Activated naive CD4-positive, alpha-beta T cell treated with anti-CD3 and anti-CD28 coated beads for 36 hours (primary cell): ENCODE measurements at regions of chr10 and their contacts with region 1.

Region 1: DNA sequence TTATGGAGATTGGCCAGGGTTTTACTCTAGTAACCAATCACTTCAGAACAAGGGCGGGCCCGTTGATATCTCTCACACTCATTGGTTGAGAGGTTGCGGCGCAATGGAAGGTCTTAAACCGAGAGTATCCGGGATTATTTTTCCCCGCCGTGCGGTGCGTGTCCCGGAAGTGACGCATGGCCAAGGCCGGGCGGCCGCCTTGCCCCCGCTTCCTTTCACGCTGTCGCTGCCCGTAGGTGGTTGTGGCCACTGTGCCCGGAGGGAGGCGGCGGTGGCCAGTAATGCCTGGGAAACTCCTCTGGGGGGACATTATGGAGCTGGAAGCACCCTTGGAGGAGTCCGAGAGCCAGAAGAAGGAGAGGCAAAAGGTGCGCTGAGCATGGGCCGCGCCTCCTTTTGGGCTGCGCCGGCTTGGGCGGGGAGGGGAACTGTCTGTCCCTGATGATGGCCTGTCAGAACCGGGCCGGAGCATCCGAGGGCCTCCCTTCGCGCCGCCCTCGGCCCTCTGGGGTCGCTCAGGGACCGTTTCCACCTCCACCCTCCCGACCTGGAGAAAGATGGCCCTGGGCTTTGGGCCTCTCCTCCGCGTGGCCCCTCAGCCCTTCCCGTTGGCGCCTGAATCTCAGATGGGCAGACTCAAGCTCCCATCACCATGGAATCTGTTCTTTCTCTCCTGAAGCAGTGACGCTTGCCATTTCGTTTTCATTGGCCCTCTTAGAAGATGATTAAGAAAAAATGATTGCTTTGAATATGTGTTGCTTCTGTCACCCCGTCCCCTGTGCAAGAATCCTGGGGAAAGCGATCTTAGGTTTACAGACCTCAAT is at the start of gene DDX50:
- DNase-seq: peak; percentile 99
- H3K4me3 Mint-ChIP-seq: peak within 1 kb of the TSS; percentile 93
- H3K27ac Mint-ChIP-seq: peak within 1 kb of the TSS; percentile 97
- H3K4me1 Mint-ChIP-seq: peaks cover 40% of the 10 kb centered on the region
- H3K27me3 Mint-ChIP-seq: no peaks in the 10 kb centered on the region
- total RNA-seq, gene DDX50: 62.1 to 66.0 TPM

Region 2: DNA sequence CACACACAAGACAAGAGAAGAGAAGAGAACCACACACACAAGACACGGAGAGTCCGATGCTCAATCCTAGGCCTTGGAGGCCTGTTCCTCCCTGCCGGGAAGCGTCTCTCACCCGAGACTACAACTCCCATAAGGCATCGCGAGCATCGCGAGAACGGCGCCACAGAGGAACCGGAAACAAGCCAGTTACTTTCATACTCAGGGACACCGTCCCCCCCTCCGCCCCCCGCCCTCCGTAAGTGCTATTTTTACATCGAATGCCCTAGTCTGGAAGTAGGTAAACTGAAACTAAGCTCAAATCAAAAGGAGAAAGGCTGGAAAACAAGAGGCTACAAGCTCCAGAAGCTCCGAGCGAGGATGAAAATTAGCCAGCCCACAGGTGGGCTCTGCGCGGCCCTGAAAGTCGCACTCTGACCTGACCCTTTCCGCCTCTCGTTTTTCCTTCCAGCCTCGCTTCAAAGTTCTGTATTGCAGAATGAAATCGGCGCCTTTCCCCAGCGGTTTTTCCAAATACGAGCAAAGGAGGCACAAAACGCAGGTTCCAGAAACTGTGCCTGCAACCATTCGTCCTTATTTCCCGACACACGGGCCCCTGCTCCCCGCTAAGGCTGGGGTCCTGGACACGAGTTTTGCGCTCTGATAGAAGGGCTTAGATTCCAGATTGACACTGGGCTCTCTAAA is 1051.8 kb before region 1 on chr10:
- CTCF ChIA-PET with region 1: no interaction called
- intact Hi-C with region 1: loop called (anchors 10 kb)
- DNase-seq: peak; percentile 98
- H3K4me3 Mint-ChIP-seq: peak overlapping the region; percentile 97
- H3K27ac Mint-ChIP-seq: peak overlapping the region; percentile 98
- H3K4me1 Mint-ChIP-seq: peaks cover 8% of the 10 kb centered on the region
- H3K27me3 Mint-ChIP-seq: no peaks in the 10 kb centered on the region

Region 3: GRCh38 chr10:68208424-68209042 is 692.8 kb before region 1 on chr10:
- CTCF ChIA-PET with region 1: no interaction called
- intact Hi-C with region 1: loop called (anchors 1 kb)
- DNase-seq: peak; percentile 63
- H3K4me3 Mint-ChIP-seq: no peak overlapping the region
- H3K27ac Mint-ChIP-seq: no peak overlapping the region
- H3K4me1 Mint-ChIP-seq: no peaks in the 10 kb centered on the region
- H3K27me3 Mint-ChIP-seq: no peaks in the 10 kb centered on the region

Region 4: GRCh38 chr10:68526626-68527307 is 374.5 kb before region 1 on chr10:
- CTCF ChIA-PET with region 1: no interaction called
- intact Hi-C with region 1: loop called (anchors 1 kb)
- DNase-seq: no peak
- H3K4me3 Mint-ChIP-seq: peak overlapping the region; percentile 93
- H3K27ac Mint-ChIP-seq: peak overlapping the region; percentile 87
- H3K4me1 Mint-ChIP-seq: peaks cover 5% of the 10 kb centered on the region
- H3K27me3 Mint-ChIP-seq: no peaks in the 10 kb centered on the region

Region 5: GRCh38 chr10:68586606-68587305 is 314.6 kb before region 1 on chr10:
- CTCF ChIA-PET with region 1: no interaction called
- intact Hi-C with region 1: no loop called
- DNase-seq: no peak
- H3K4me3 Mint-ChIP-seq: no peak overlapping the region
- H3K27ac Mint-ChIP-seq: no peak overlapping the region
- H3K4me1 Mint-ChIP-seq: no peaks in the 10 kb centered on the region
- H3K27me3 Mint-ChIP-seq: no peaks in the 10 kb centered on the region

Region 6: DNA sequence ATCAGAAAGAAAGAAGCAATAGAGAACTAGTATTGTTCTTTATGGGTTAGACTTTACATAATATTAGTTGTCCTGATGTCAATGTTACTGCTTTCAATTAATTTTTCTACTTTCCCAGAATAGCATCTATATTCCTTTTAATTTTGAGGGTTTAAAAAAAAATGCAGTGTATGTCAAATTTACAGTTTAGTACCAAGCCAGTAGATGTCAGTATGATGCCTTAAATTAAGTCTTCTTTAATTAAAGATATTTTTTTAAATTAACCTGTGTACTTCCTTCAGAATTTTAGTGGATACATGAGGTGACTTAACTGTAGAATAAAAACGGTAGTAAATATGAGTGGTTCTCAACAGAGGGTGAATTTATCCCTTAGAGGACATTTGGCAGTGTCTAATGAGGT is 109.2 kb before region 1 on chr10:
- CTCF ChIA-PET with region 1: interaction called, 3 read pairs
- intact Hi-C with region 1: loop called (anchors 2 kb)
- DNase-seq: no peak
- H3K4me3 Mint-ChIP-seq: no peak overlapping the region
- H3K27ac Mint-ChIP-seq: no peak overlapping the region
- H3K4me1 Mint-ChIP-seq: no peaks in the 10 kb centered on the region
- H3K27me3 Mint-ChIP-seq: no peaks in the 10 kb centered on the region

Region 7: DNA sequence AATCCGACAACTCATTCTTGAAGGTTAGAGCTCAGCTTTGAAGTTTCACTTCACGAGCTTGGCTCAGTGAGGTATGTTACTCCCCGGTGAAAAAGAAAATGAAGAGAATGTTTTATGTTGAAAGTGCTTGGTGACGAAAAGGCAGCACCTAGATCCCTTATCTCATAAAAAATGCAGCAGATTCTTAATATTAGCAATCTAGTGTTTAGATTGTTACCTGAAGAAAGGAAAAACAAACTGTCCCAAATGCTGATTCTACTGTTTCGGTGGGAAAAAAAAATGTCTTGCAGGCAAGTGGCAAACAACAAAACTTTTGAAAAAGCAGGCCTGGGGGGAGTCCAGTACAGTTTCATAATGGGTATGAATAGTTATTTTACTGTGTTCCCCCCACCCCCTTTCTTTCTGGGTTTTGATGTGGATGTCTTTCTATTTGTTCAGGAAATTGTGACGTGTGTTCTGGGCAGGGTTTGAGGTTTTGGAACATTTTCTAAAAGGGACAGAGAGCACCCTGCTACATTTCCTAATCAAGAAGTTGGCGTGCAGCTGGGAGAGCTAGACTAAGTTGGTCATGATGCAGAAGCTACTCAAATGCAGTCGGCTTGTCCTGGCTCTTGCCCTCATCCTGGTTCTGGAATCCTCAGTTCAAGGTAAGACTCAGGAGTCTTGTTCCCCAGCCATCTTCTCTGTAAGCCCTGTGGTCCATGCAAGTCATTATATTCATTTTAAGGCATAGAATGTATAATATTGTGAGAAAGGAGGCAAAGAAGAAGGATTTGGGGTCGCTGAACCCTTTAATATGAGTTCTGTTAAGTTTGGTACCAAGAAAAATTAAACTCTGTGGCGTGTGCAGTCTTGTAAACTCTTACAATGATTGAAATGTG is 186.5 kb after region 1 on chr10 and contains the start of gene SRGN:
- CTCF ChIA-PET with region 1: no interaction called
- intact Hi-C with region 1: loop called (anchors 1 kb)
- DNase-seq: peak; percentile 91
- H3K4me3 Mint-ChIP-seq: peak within 1 kb of the TSS; percentile 89
- H3K27ac Mint-ChIP-seq: peak within 1 kb of the TSS; percentile 99
- H3K4me1 Mint-ChIP-seq: peaks cover 59% of the 10 kb centered on the region
- H3K27me3 Mint-ChIP-seq: no peaks in the 10 kb centered on the region
- total RNA-seq, gene SRGN: 197 to 198 TPM